Motor neuron (in vitro differentiated cells): ENCODE measurements at regions of chr11 and their contacts with region 1.

Region 1: DNA sequence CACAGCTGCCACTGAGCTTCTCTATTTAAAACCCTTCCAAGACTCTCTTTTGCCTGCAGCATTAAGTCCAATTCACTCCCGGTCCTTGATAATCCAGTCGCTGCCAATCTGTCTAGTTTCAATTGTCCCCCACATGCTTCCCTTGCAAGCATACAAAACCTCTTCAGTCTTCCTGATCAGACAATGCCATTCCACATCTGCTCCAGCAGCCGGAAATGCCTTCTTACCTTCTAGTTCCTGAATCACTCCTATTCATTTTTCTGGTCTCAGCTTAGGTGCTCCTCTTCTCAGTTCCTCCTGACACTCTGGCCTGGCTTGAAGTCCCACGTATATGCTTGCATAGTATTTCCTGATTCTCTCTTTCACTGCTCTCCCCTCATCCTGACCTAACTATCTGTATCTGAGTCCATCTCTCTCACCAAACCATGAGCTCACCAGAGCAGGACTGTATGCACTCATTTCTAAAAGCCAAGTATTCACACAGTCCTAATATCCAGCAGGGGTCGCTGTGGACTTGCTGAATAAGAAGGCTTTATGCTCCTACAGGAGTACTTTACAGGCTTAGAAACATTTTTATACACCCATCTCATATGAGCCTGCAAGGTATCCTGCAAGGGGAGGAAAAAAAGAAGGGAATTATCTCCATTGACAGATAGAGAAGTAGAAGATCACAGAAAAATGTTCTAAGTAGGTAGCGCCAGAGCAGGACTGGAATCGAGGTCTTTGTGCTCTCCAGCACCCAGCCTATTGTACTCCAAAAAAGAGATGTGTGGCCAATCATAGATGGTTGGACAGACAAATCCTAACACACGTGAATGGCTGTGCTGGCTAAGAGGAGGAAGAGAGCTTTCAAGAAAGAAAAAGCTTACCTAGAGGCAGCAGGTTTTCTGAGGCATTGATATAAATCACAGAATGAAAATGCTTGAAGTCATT is 19.2 kb downstream of the XRRA1 start:
- ATAC-seq: peak; percentile 75 to 100 (median 88)
- H3K4me3 ChIP-seq: no peak overlapping the region
- H3K27ac ChIP-seq: no peak overlapping the region
- H3K4me1 ChIP-seq: no peaks in the 10 kb centered on the region

Region 2: DNA sequence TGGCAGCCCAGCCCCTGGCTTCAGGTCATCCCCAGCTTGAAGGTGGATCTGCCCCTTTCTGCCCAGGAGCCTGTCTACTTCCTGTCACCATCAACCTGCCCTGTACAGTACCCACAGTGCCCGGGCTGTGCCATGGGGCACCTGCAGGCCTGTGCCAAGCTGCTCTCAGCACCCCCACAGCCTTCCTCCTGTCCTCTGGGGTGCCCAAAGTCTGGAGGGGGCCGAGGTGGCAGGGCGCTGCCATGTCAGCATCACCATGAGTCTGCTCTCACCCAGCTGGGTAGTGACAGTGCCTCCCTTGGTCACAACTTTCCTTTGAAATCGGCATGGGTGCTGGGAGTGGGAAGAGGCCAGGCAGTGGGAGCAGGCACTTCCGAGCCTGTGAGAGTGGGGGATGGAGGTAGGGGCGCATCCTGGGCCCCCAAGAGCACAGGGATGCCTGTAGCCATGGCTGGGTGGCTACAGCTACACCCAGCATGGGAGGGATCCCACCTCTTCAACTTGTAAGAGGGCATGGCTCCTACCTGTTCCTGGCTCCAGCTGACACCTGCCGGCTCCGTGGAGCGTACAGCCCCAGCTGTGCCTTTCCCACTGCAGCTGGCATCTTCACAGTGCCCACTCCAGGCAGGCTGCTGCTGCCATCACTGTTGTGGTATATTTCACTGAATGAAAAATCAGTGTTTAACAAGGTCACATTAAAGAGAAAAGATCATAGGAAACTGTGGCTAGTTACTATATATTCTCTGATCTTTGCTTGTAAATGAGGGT is 138.2 kb before region 1 on chr11:
- in situ Hi-C with region 1: no loop called
- ATAC-seq: no peak
- H3K4me3 ChIP-seq: no peak overlapping the region
- H3K27ac ChIP-seq: no peak overlapping the region
- H3K4me1 ChIP-seq: no peaks in the 10 kb centered on the region

Region 3: GRCh38 chr11:75249704-75250103 is 320.0 kb after region 1 on chr11:
- in situ Hi-C with region 1: loop called in 3 of 9 experiments (anchors 10 to 25 kb)
- ATAC-seq: no peak
- H3K4me3 ChIP-seq: no peak overlapping the region
- H3K27ac ChIP-seq: no peak overlapping the region
- H3K4me1 ChIP-seq: peaks cover 9 to 12% of the 10 kb centered on the region in 2 donors